Gastrocnemius medialis (tissue), 4 donors: ENCODE measurements at regions of chr2 and their contacts with region 1.

Region 1: GRCh38 chr2:5365871-5366461 is 326.2 kb upstream of the SOX11 start:
- DNase-seq: peak; percentile 8 to 31
- ATAC-seq: peak; percentile 56 to 74
- H3K4me3 ChIP-seq: no peak overlapping the region
- H3K27ac ChIP-seq: no peak overlapping the region
- H3K4me1 ChIP-seq: no peaks in the 10 kb centered on the region
- H3K27me3 ChIP-seq: no peaks in the 10 kb centered on the region
- CTCF ChIP-seq: peak; percentile 41 to 75 (median 73)
- POLR2A ChIP-seq: no peak

Region 2: DNA sequence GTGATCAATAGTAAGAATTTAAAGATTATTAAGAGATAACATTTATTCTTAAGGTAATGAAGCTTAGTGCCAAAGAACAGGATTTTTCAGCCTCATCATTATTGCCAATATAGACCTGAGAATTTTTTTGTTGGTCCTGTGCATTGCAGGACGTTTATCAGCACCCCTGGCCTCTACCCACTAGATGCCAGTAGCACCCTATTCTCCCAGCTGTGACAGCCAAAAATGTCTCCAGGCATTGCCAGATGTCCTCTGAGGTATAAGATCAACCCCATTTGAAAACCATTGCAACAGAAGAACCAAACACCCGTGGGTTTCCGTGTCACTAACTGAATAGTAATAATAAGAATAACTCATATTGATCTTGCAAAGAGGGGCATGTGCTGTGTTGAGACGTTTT is 373.7 kb before region 1 on chr2:
- in situ Hi-C with region 1: loop called in 2 of 4 experiments (anchors 10 to 25 kb)
- intact Hi-C with region 1: loop called (anchors 2 kb)
- DNase-seq: no peak
- ATAC-seq: no peak
- H3K4me3 ChIP-seq: no peak overlapping the region
- H3K27ac ChIP-seq: no peak overlapping the region
- H3K4me1 ChIP-seq: no peaks in the 10 kb centered on the region
- H3K27me3 ChIP-seq: no peaks in the 10 kb centered on the region
- CTCF ChIP-seq: peak in 4 of 5 experiments; percentile 9 to 35 (median 32)
- POLR2A ChIP-seq: no peak

Region 3: DNA sequence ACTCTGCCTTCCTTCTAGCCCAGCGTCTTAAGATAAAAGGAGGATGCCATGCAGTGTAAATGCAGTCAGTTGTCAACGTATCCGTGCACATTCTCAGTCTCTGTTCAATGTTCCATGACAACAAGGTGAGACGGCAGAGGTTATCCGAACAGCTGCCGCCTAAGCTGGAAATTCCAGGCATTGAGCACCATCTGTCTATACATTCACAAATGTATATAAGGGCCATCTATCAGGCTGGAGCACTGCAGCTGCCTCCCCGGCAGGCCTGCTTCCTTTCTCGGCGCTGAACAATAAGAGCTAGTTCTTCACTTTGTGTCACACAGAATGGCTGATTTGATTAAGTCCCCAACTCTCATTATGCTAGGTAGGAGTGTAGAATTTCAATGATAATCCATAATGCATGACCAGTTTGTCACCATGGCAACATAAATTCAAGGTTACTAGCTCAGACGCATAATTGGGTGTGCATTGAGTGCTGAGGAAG is 44.0 kb after region 1 on chr2:
- in situ Hi-C with region 1: no loop called
- intact Hi-C with region 1: no loop called
- DNase-seq: no peak
- ATAC-seq: no peak
- H3K4me3 ChIP-seq: no peak overlapping the region
- H3K27ac ChIP-seq: no peak overlapping the region
- H3K4me1 ChIP-seq: no peaks in the 10 kb centered on the region
- H3K27me3 ChIP-seq: no peaks in the 10 kb centered on the region
- CTCF ChIP-seq: no peak
- POLR2A ChIP-seq: no peak

Region 4: DNA sequence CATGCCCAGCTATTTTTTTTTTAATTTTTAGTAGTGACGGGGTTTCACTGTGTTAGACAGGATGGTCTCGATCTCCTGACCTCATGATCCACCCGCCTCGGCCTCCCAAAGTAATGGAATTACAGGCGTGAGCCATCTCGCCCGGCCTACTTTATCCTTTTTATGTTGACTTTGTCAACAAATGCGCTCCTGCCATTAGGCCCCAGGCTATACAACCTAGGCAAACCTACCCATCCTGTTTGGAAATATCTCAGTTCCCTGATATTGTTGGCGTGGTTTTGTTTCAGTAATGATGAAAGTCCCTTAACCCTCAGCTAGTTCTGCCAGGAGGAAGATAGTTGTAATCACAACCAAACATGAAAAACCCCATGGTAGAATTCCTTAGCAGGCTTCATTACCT is 76.8 kb after region 1 on chr2:
- in situ Hi-C with region 1: no loop called
- intact Hi-C with region 1: no loop called
- DNase-seq: no peak
- ATAC-seq: no peak
- H3K4me3 ChIP-seq: no peak overlapping the region
- H3K27ac ChIP-seq: no peak overlapping the region
- H3K4me1 ChIP-seq: peaks cover 0 to 3% of the 10 kb centered on the region in 2 donors
- H3K27me3 ChIP-seq: no peaks in the 10 kb centered on the region
- CTCF ChIP-seq: no peak
- POLR2A ChIP-seq: no peak